PC-9 (cell line): ENCODE measurements at regions of chr9 and their contacts with region 1.

Region 1: GRCh38 chr9:123536455-123536868 is 180.5 kb downstream of the CRB2 start:
- DNase-seq: no peak
- H3K4me3 ChIP-seq: no peak overlapping the region
- H3K27ac ChIP-seq: no peak overlapping the region
- H3K4me1 ChIP-seq: no peaks in the 10 kb centered on the region
- H3K27me3 ChIP-seq: no peaks in the 10 kb centered on the region
- CTCF ChIP-seq: no peak

Region 2: GRCh38 chr9:123658792-123659191 is 122.3 kb after region 1 on chr9:
- CTCF ChIA-PET with region 1: no interaction called
- POLR2A ChIA-PET with region 1: no interaction called
- intact Hi-C with region 1: no loop called
- DNase-seq: no peak
- H3K4me3 ChIP-seq: no peak overlapping the region
- H3K27ac ChIP-seq: no peak overlapping the region
- H3K4me1 ChIP-seq: no peaks in the 10 kb centered on the region
- H3K27me3 ChIP-seq: no peaks in the 10 kb centered on the region
- CTCF ChIP-seq: no peak

Region 3: GRCh38 chr9:124126571-124127289 is 590.3 kb after region 1 on chr9:
- CTCF ChIA-PET with region 1: no interaction called
- POLR2A ChIA-PET with region 1: interaction called, 4 read pairs
- intact Hi-C with region 1: loop called (anchors 2 kb)
- DNase-seq: peak; percentile 67 to 81
- H3K4me3 ChIP-seq: no peak overlapping the region
- H3K27ac ChIP-seq: no peak overlapping the region
- H3K4me1 ChIP-seq: no peaks in the 10 kb centered on the region
- H3K27me3 ChIP-seq: no peaks in the 10 kb centered on the region
- CTCF ChIP-seq: peak; percentile 99